ENCODE measurements at regions of chr2 and their contacts with region 1.

Region 1: GRCh38 chr2:45497355-45497754 is 113.7 kb downstream of the SRBD1 start:
- DNase-seq: no peak
- ATAC-seq: no peak
- H3K4me3 ChIP-seq: no peak overlapping the region
- H3K27ac ChIP-seq: no peak overlapping the region
- H3K4me1 ChIP-seq: peaks cover 7% of the 10 kb centered on the region
- H3K27me3 ChIP-seq: no peaks in the 10 kb centered on the region
- CTCF ChIP-seq: no peak
- POLR2A ChIP-seq: no peak

Region 2: GRCh38 chr2:44975571-44976450 is 521.5 kb before region 1 on chr2:
- intact Hi-C with region 1: loop called (anchors 5 kb)
- DNase-seq: no peak
- ATAC-seq: no peak
- H3K4me3 ChIP-seq: no peak overlapping the region
- H3K27ac ChIP-seq: no peak overlapping the region
- H3K4me1 ChIP-seq: no peaks in the 10 kb centered on the region
- H3K27me3 ChIP-seq: no peaks in the 10 kb centered on the region
- CTCF ChIP-seq: no peak
- POLR2A ChIP-seq: no peak

Measured in body of pancreas (tissue), 4 donors.